ENCODE measurements at regions of chr10 and their contacts with region 1.

Region 1: DNA sequence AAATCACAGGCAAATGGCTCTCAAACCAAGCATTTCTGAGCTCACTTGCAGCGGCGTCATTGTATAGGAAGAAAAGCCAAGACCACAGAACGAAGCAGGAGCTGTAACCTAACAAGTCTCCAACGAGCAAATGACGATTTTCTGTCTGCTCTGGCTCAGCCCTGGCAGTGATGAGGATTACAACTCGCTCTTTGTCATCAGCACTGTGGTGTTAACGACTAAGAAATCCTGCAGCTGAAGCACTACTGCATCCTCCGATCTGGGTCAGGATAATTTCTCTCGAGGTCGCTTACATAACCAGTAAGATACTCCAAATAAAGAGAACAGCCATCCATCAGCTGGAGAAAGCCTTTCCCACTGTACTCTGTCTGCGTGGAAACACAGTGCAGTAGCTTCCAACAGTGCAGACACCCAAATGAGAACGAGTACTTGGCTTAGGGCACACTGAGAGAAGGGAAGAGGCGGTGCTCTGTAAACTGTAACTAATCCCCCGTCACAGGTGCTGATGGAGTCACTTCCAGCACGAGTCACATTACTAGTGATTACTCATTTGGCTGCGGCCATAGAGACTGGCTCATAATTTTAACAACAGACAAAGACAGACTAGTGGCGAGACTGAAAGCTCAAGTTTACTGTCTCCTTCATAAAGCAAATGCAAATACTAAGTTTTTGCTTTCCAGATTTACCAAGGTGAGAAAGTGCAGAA is 135.8 kb downstream of the NRBF2 start:
- DNase-seq: peak; percentile 86
- ATAC-seq: peak; percentile 91
- H3K4me3 Mint-ChIP-seq: peak overlapping the region; percentile 94
- H3K27ac Mint-ChIP-seq: peak overlapping the region; percentile 99
- H3K4me1 Mint-ChIP-seq: peaks cover 21% of the 10 kb centered on the region
- H3K27me3 Mint-ChIP-seq: no peaks in the 10 kb centered on the region

Region 2: DNA sequence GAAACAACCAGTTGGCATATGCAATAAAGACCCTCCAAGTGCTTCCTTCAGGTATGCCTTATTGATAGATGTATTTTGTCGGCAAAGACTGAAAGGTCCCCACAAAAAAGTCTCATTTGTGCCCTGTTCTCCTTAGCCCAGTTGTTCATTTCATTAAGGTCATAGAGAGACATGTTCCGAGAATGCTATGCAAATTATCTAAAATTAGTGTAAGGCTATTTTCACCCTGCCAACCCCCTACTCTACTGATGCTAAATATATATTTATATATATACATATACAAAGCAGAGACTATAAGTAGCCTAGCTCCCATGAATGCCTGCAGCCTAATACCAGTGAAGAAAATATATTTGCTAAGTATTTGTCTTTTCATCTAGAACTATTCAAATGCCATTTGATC is 561.1 kb before region 1 on chr10:
- CTCF ChIA-PET with region 1: no interaction called
- POLR2A ChIA-PET with region 1: no interaction called
- intact Hi-C with region 1: no loop called
- DNase-seq: no peak
- ATAC-seq: no peak
- H3K4me3 Mint-ChIP-seq: no peak overlapping the region
- H3K27ac Mint-ChIP-seq: no peak overlapping the region
- H3K4me1 Mint-ChIP-seq: peaks cover 6% of the 10 kb centered on the region
- H3K27me3 Mint-ChIP-seq: peaks cover 3% of the 10 kb centered on the region

Region 3: DNA sequence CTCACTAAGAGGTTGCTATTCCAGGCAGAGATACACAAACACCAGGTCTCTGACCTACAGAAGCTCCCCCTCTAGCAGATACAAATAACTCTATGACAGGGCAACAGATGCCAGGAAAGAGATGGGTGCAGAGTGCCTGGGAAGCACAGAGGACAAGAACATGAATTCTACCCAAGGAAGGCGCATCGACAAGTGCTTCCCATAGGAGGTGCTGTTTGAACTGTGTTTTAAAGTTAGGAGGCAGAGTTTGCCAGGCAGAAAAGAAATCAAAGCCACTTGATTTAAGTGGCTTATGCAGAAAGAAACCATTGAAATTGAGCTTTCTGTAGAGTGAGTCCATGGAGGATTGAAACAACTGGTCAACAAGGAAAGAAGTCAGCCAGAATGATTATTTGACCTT is 417.5 kb before region 1 on chr10:
- CTCF ChIA-PET with region 1: no interaction called
- POLR2A ChIA-PET with region 1: no interaction called
- intact Hi-C with region 1: loop called in 1 of 2 experiments (anchors 1 kb)
- DNase-seq: peak; percentile 51
- ATAC-seq: no peak
- H3K4me3 Mint-ChIP-seq: no peak overlapping the region
- H3K27ac Mint-ChIP-seq: no peak overlapping the region
- H3K4me1 Mint-ChIP-seq: peaks cover 47% of the 10 kb centered on the region
- H3K27me3 Mint-ChIP-seq: peaks cover 20% of the 10 kb centered on the region

Region 4: DNA sequence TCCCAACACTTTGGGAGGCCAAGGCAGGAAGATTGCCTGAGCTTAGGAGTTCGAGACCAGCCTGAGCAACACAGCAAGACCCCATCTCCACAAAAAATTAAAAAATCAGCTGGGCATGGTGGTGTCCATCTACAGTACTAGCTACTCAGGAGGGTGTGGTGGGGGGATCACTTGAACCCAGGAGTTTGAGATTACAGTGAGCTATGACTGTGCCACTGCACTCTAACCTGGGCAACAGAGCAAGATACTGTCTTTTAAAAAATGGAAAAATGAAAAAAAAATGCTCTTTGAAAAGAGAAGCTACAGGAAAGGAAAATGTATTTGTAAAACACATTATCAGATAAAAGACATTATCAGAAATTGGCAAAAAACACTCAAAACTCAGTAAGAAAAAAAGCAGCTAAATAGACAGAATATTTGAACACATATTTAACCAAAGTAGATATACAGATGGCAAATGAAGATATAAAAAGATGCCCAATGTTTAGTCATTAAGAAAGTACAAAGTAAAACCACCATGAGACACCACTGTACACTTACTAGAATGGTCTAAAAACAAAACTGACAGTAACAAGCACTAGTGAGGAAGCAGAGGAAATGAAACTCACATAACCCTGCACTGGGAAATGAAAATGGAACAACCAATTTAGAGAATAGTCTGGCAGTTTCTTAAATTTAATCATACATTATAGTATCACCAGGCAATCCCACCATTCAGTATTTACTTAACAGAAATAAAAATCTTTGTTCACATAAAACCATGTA is 95.3 kb before region 1 on chr10:
- CTCF ChIA-PET with region 1: no interaction called
- POLR2A ChIA-PET with region 1: no interaction called
- intact Hi-C with region 1: loop called (anchors 1 kb)
- DNase-seq: no peak
- ATAC-seq: peak; percentile 96
- H3K4me3 Mint-ChIP-seq: no peak overlapping the region
- H3K27ac Mint-ChIP-seq: peak overlapping the region; percentile 72
- H3K4me1 Mint-ChIP-seq: peaks cover 52% of the 10 kb centered on the region
- H3K27me3 Mint-ChIP-seq: no peaks in the 10 kb centered on the region

Region 5: DNA sequence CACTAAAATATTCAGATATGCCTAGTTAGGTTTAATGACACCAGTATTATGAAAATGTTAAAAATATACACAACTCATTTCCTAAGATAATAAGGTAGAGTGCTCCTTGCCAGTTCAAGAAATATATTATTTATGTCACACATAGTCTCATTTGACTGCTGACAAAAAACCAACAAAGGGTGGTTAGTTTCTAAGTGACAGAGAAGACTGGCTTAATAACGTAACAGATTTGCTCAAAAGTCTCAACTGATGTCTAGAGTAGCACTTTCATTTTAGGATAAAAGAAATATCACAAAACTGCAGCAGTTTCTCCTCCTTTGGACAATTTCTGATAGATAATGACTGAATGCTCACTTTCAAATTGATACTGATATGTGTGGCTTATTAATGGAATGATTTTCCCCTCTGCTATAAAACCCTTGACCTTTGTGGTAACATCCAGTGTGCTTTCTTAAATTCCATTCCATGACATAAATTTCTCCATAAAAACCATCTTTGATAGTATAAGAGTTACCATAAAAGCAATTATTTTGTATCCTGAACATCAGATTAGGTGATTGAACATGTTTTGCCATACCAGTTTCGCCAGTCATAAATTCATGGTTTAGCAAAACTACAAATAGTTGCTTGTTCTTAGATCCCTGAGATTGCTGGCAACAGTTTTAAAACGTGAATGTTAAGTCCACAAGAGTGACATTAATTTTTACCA is 41.6 kb before region 1 on chr10:
- CTCF ChIA-PET with region 1: interaction called, 13 read pairs
- POLR2A ChIA-PET with region 1: interaction called, 8 read pairs
- intact Hi-C with region 1: loop called (anchors 2 kb)
- DNase-seq: no peak
- ATAC-seq: peak; percentile 45
- H3K4me3 Mint-ChIP-seq: peak overlapping the region; percentile 52
- H3K27ac Mint-ChIP-seq: peak overlapping the region; percentile 88
- H3K4me1 Mint-ChIP-seq: peaks cover 53% of the 10 kb centered on the region
- H3K27me3 Mint-ChIP-seq: no peaks in the 10 kb centered on the region

Region 6: DNA sequence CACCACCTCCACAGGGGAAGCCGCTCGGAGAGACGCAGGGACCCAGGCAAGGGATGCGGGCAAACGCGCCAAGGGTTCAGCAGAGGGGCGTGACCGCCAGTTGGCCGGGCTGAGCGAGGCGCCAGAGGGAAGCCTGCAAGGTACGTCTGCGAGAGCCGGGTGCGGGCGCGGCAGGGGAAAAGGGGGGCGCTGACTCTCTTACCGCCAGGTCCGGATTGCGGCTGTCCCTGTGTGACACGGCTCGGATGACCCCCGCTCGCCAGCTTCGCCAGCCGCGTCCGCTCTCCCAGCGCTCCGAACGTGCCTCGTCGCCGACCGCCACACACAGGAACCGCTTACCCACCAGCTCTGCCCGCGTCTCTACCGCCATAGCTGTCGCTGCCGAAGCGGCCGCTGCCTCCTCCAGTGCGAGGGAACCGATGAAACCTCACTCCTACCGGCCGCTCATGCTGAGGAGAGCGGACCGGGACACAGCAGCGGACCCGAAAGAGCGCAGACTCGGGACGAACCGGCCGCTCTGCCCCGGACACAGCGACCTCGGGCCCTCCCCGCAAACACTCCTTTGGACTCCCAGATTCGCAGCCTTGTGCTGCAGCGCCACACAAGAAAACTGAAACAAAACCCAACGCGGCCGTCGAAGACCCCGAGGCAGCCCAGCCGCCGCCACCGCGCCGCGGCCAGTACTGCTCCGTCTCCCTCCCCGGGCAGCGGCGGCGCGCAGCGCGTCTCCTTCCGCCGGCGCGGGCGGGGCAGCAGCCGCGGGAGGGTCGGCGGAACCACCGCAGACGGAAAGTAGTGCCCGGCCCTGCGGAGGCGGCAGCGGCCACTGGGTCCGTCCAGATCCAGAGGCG is 196.6 kb after region 1 on chr10 and contains the start of gene JMJD1C:
- CTCF ChIA-PET with region 1: no interaction called
- POLR2A ChIA-PET with region 1: no interaction called
- intact Hi-C with region 1: loop called in 1 of 2 experiments (anchors 1 kb)
- DNase-seq: peak; percentile 76
- ATAC-seq: peak; percentile 73
- H3K4me3 Mint-ChIP-seq: peak within 1 kb of the TSS; percentile 94
- H3K27ac Mint-ChIP-seq: peak within 1 kb of the TSS; percentile 72
- H3K4me1 Mint-ChIP-seq: peaks cover 23% of the 10 kb centered on the region
- H3K27me3 Mint-ChIP-seq: no peaks in the 10 kb centered on the region
- total RNA-seq, gene JMJD1C: 41.5 to 42.5 TPM

Region 7: GRCh38 chr10:63707254-63707910 is 438.4 kb after region 1 on chr10:
- CTCF ChIA-PET with region 1: no interaction called
- POLR2A ChIA-PET with region 1: no interaction called
- intact Hi-C with region 1: loop called in 1 of 2 experiments (anchors 1 kb)
- DNase-seq: peak; percentile 39
- ATAC-seq: peak; percentile 94
- H3K4me3 Mint-ChIP-seq: no peak overlapping the region
- H3K27ac Mint-ChIP-seq: no peak overlapping the region
- H3K4me1 Mint-ChIP-seq: peaks cover 19% of the 10 kb centered on the region
- H3K27me3 Mint-ChIP-seq: no peaks in the 10 kb centered on the region

Region 8: GRCh38 chr10:63799521-63800300 is 530.8 kb after region 1 on chr10:
- CTCF ChIA-PET with region 1: no interaction called
- POLR2A ChIA-PET with region 1: no interaction called
- intact Hi-C with region 1: no loop called
- DNase-seq: no peak
- ATAC-seq: no peak
- H3K4me3 Mint-ChIP-seq: no peak overlapping the region
- H3K27ac Mint-ChIP-seq: no peak overlapping the region
- H3K4me1 Mint-ChIP-seq: peaks cover 7% of the 10 kb centered on the region
- H3K27me3 Mint-ChIP-seq: no peaks in the 10 kb centered on the region

Measured in activated CD4-positive, alpha-beta T cell treated with anti-CD3 and anti-CD28 coated beads for 36 hours (primary cell).